Activated T-helper 2 cell treated with anti-CD3 and anti-CD28 coated beads, Interferon-gamma antibody, Interleukin-2, Interleukin-4, amounts not matched to agents 10 μg/mL and 5 μg/mL and 100 μg/mL, durations not matched to agents 14 hours and 24 hours and 36 hours (primary cell): ENCODE measurements at regions of chr5 and their contacts with region 1.

Region 1: DNA sequence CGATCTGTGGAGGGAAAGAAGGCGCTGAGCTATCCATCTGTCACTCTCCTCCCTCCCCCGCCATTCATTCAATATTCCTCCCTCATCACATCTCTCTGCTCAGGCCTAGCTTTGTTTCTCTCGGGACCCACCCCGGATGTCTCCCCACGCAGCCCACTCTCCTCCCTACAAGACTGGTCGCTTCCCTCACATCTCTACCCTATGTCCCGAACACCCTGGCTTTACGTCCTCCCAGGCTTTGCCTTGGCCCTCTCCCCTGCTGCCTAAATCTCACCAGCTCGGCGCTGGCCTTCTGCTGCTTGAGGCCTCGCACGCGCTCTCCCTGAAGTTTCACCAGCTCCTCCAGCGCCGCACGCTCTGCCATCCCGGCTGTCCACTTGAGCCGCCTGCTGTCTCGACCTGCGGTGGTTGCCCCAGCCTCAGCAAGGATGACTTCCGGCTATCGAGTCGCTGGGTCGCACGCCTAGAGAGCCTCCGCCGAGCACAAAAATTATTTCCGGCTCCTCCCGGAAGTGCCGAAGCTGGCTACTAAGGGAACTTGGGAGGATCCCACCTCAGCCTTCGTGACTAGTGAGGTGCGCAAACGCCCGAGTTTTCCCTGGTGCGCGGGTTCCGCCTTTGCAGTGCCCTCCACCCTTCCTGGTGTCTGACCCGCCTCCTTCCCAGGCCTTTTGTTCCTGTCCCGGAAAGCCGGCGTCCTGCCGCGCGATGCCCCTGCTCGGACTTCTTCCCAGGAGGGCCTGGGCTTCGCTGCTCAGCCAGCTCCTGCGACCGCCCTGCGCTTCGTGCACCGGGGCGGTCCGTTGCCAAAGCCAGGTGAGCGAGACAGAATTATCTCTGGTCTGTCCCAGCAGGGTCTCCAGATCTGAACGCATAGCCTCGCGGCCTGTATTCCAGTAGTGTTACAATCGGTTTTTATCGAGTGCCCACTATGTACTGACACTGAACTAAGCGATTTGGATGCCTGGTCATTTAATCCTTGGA is at the starts of genes HARS1 and HARS2:
- DNase-seq: peak; percentile 79
- H3K4me3 Mint-ChIP-seq: peak within 1 kb of the TSS; percentile 97
- H3K27ac Mint-ChIP-seq: peak within 1 kb of the TSS; percentile 91
- H3K4me1 Mint-ChIP-seq: peaks cover 20% of the 10 kb centered on the region
- H3K27me3 Mint-ChIP-seq: no peaks in the 10 kb centered on the region
- total RNA-seq, gene HARS1: 107 and 110 TPM in 2 replicates
- total RNA-seq, gene HARS2: 28.0 and 30.1 TPM in 2 replicates

Region 2: DNA sequence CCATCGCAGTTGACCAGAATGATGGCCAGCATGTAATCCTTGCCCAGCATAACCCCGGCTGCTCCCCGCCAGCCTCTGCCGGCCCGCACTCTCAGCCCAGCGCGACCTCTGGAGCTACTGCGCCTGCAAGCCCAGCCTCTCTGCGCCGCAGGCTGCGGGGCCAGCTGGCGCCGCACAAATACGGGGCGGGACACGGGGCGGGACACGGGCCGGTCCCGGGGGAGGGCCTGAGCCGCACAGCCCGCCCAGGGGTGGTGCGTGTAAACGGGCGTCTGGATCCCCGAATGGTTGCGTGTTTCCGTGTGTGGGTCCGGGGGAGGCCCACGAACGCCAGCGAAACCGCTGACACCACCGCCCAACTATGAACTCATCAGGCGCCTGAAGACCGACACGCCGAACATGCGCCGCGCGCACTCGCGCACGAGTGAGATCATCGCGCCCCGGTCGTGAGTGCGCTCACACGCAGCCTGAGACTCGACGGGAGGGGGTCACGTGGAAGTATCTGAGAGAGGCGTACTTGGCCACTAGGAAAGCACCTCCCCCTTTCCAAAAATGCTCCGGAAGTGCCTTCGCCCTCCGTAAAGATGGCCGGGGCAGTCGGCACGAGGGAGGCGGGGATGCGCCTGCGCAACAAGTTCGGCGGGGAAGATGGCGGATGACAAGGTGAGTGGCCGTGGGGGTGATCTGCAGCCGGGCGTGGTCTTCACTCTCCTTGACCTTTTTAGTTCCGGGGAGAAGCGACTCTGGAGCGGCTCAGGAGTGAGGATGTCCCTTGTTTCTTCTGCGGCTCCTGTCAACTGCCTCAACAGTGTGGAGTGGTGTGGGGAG is 126.8 kb before region 1 on chr5 and contains the starts of genes APBB3 and SLC35A4:
- intact Hi-C with region 1: loop called (anchors 1 kb)
- DNase-seq: peak; percentile 97
- H3K4me3 Mint-ChIP-seq: peak within 1 kb of the TSS; percentile 96
- H3K27ac Mint-ChIP-seq: peak within 1 kb of the TSS; percentile 95
- H3K4me1 Mint-ChIP-seq: peaks cover 33% of the 10 kb centered on the region
- H3K27me3 Mint-ChIP-seq: no peaks in the 10 kb centered on the region
- total RNA-seq, gene APBB3: 15.1 and 17.9 TPM in 2 replicates
- total RNA-seq, gene SLC35A4: 91.9 and 97.3 TPM in 2 replicates

Region 3: GRCh38 chr5:140647042-140647341 is 44.2 kb before region 1 on chr5:
- intact Hi-C with region 1: loop called (anchors 1 kb)
- DNase-seq: no peak
- H3K4me3 Mint-ChIP-seq: peak overlapping the region; percentile 99
- H3K27ac Mint-ChIP-seq: peak overlapping the region; percentile 99
- H3K4me1 Mint-ChIP-seq: peaks cover 21% of the 10 kb centered on the region
- H3K27me3 Mint-ChIP-seq: no peaks in the 10 kb centered on the region

Region 4: DNA sequence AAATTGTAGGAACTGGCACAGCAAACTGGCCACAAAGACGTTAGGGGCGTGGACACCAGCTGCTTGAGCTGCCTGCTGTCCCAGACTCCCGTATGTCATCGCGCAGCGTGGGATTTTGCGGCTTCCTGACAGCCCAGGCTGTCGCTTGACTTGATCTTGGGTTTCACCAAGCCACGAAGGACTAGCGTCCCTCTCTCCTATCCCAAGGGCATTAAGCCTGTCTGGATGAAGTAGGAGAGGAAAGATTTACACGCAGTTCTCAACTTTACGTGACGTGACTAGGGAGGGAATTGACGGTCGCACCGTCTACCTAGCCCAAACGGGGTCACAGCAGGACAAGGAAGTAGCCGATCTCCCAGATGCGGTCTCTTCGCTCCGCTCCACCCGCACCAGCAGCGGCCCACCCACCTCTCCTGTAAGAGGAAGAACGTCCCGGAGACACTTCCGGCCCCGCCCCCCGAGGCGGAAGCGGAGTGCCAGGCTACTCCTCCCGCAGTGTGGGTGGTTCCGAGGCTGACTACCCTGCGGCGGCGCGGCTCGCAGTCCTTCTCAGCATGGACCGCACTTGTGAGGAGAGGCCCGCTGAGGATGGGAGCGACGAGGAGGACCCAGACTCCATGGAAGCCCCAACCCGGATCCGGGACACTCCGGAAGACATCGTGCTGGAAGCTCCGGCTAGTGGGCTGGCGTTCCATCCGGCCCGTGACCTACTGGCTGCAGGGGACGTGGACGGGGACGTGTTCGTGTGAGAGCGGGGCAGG is 26.7 kb before region 1 on chr5 and contains the start of gene WDR55:
- intact Hi-C with region 1: loop called (anchors 1 kb)
- DNase-seq: peak; percentile 94
- H3K4me3 Mint-ChIP-seq: peak within 1 kb of the TSS; percentile 99
- H3K27ac Mint-ChIP-seq: peak within 1 kb of the TSS; percentile 95
- H3K4me1 Mint-ChIP-seq: peaks cover 25% of the 10 kb centered on the region
- H3K27me3 Mint-ChIP-seq: no peaks in the 10 kb centered on the region
- total RNA-seq, gene WDR55: 39.1 and 40.0 TPM in 2 replicates

Region 5: DNA sequence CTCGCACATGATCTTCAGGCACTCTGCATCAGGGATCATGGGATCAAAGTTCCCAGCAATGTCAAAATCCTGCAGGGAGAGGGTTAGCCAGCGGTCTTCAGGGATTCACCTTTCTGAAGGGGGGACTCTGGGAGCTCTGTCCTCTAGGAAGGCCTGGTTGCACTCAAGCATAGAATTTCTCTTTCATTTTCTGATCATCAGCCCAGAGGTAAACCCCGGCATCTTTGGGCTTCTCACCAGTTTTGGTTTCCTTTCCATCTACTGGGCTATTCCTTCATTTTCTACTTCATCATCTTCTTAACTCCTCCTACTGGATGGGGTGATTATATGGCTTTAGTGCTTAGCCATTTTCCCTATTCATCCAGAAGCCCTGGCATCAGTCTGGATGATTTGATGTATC is 13.3 kb before region 1 on chr5:
- intact Hi-C with region 1: loop called (anchors 2 kb)
- DNase-seq: no peak
- H3K4me3 Mint-ChIP-seq: no peak overlapping the region
- H3K27ac Mint-ChIP-seq: no peak overlapping the region
- H3K4me1 Mint-ChIP-seq: peaks cover 4% of the 10 kb centered on the region
- H3K27me3 Mint-ChIP-seq: no peaks in the 10 kb centered on the region

Region 6: GRCh38 chr5:140725799-140726471 is 34.7 kb after region 1 on chr5:
- intact Hi-C with region 1: loop called (anchors 2 kb)
- DNase-seq: peak; percentile 75
- H3K4me3 Mint-ChIP-seq: peak overlapping the region; percentile 76
- H3K27ac Mint-ChIP-seq: peak overlapping the region; percentile 61
- H3K4me1 Mint-ChIP-seq: peaks cover 5% of the 10 kb centered on the region
- H3K27me3 Mint-ChIP-seq: peaks cover 10% of the 10 kb centered on the region